Dorsolateral prefrontal cortex (tissue), 120 donors: ENCODE measurements at regions of chr9 and their contacts with region 1.

Region 1: GRCh38 chr9:4762108-4762885 is 21.3 kb upstream of the AK3 start:
- DNase-seq: peak; percentile 50 to 85 (median 72)
- H3K4me3 ChIP-seq: peak overlapping the region in 36 of 59 donors; percentile 0 to 50 (median 22)
- H3K27ac ChIP-seq: peak overlapping the region in 5 of 59 donors; percentile 11 to 65 (median 35)
- H3K27me3 ChIP-seq: no peaks in the 10 kb centered on the region
- CTCF ChIP-seq: peak; percentile 70 to 99 (median 88)

Region 2: DNA sequence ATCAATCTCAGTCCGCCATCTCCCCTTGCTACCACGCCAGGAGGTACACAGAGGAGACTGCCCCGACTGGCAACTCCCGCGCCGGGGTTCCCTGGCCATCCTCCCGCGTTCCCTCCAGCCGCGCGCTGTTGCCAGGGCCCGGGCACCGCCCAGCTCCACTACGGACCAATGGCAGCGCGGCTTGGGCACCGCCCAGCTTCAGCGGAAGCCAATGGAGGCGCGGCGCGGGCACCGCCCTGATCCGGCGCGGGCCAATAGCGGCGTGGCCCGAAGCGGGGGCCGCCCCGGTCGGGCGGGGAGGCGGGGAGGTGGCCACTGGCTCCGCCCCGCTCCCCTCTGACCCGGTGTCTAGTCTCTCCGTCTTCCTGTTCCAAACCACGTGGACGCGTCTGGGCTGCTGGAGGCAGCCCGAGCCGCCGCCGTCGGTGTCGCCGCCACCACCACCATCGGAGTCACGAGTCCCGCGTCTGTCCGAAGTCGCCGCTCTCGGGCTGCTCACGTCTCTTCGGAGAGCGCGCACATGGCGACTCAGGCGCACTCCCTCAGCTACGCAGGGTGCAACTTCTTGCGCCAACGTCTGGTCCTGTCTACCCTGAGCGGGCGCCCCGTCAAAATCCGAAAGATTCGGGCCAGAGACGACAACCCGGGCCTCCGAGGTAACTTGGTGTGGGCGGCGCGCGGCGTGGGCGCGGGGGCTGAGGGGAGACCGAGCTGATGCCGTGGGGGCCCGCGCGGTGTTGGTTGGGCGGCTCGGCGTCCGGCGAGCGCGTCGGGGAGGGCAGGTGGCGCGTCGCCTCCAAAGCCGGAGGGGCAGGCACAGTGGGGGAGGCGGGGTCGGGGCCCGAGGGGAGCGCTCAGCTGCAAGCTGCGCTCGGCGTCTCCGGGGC is 30.5 kb after region 1 on chr9 and contains the start of gene RCL1:
- intact Hi-C with region 1: loop called (anchors 5 kb)
- DNase-seq: peak; percentile 94 to 100 (median 97)
- H3K4me3 ChIP-seq: peak within 1 kb of the TSS; percentile 67 to 99 (median 92)
- H3K27ac ChIP-seq: peak within 1 kb of the TSS; percentile 16 to 93 (median 82)
- H3K27me3 ChIP-seq: no peaks in the 10 kb centered on the region
- CTCF ChIP-seq: peak in 16 of 56 donors; percentile 8 to 49 (median 17)
- total RNA-seq, gene RCL1: 17.9 to 36.6 (median 25.8) TPM

Region 3: DNA sequence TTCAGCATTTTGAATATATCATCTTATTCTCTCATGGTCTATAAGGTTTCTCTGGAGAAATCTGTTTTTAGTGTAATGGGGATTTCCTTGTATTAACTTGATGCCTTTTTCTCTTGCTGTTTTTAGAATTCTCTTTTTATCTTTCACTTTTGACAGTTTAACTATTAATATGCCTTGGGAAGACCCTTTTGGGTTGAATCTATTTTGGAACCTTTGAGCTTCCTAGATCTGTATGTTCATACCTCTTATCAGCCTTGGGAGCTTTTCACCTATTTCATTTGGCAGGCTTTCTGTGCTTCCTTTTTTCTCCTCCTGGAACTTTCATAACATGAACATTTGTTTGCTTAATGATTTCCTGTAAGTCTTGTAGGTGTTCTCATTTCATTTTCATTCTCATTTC is 52.6 kb after region 1 on chr9:
- intact Hi-C with region 1: no loop called
- DNase-seq: no peak
- H3K4me3 ChIP-seq: no peak overlapping the region
- H3K27ac ChIP-seq: no peak overlapping the region
- H3K27me3 ChIP-seq: no peaks in the 10 kb centered on the region
- CTCF ChIP-seq: no peak

Region 4: GRCh38 chr9:4923580-4924544 is 161.6 kb after region 1 on chr9:
- intact Hi-C with region 1: loop called in 1 of 2 experiments (anchors 5 kb)
- DNase-seq: no peak
- H3K4me3 ChIP-seq: no peak overlapping the region
- H3K27ac ChIP-seq: no peak overlapping the region
- H3K27me3 ChIP-seq: no peaks in the 10 kb centered on the region
- CTCF ChIP-seq: peak in 42 of 56 donors; percentile 13 to 56 (median 33)

Region 5: DNA sequence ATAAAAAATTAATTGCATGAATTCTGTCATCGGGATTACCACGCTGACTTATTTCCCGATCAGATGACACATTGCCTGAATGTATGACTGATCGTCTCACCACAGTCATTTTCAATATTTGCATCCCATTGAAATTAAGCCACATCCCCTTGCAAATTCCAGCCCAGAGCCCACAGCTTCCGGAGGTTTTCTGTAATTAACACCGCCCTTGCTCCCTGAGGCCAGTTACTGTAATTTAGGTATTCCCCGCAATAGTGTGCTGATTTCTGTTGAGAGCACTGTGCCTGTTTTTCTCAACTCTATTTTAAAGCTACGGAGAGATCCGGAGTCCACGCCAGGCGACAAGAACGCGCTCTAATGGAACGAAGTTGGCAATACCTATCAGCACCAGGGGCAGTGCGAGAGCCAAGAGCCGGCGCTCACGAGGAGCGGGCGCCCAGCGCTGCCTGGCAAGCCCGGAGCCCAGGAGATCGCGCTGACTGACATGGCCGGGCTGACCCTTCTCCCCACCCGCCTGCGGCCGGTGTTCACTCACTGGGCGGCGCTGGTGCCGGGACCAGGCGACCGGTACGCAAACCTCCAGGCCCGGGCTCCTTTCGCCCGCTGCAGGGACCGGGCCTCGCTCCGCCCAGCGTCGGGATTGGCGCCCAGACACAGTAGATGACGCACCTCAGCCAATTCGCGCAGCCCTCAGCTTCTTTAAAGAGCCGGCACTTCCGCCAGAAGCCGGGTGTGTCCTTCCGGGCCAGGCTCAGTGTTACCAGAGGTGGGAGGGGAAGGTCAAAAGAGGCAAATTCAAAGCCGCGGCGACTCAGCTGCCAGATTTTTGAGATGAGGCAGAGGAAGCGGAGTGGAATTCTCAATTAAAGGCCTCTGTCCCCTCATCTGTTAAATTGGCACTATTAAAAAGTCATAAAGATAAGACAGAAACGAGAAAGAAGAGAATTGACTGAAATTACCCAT is 675.2 kb after region 1 on chr9 and contains the start of gene PLGRKT:
- intact Hi-C with region 1: loop called in 1 of 2 experiments (anchors 10 kb)
- DNase-seq: peak; percentile 93 to 99 (median 97)
- H3K4me3 ChIP-seq: peak within 1 kb of the TSS; percentile 58 to 98 (median 83)
- H3K27ac ChIP-seq: peak within 1 kb of the TSS; percentile 73 to 99 (median 93)
- H3K27me3 ChIP-seq: no peaks in the 10 kb centered on the region
- CTCF ChIP-seq: peak in 51 of 56 donors; percentile 6 to 66 (median 46)
- total RNA-seq, gene PLGRKT: 4.1 to 17.5 (median 10.1) TPM

Region 6: GRCh38 chr9:5593904-5594303 is 831.6 kb after region 1 on chr9:
- intact Hi-C with region 1: loop called (anchors 5 to 10 kb)
- DNase-seq: no peak
- H3K4me3 ChIP-seq: no peak overlapping the region
- H3K27ac ChIP-seq: no peak overlapping the region
- H3K27me3 ChIP-seq: no peaks in the 10 kb centered on the region
- CTCF ChIP-seq: no peak